ENCODE measurements at regions of chr14 and their contacts with region 1.

Region 1: GRCh38 chr14:58815161-58815701 is 177.5 kb downstream of the DACT1 start:
- DNase-seq: no peak
- CTCF ChIP-seq: no peak

Region 2: GRCh38 chr14:58705066-58705465 is 110.2 kb before region 1 on chr14:
- CTCF ChIA-PET with region 1: no interaction called
- POLR2A ChIA-PET with region 1: no interaction called
- DNase-seq: no peak
- CTCF ChIP-seq: no peak

Region 3: DNA sequence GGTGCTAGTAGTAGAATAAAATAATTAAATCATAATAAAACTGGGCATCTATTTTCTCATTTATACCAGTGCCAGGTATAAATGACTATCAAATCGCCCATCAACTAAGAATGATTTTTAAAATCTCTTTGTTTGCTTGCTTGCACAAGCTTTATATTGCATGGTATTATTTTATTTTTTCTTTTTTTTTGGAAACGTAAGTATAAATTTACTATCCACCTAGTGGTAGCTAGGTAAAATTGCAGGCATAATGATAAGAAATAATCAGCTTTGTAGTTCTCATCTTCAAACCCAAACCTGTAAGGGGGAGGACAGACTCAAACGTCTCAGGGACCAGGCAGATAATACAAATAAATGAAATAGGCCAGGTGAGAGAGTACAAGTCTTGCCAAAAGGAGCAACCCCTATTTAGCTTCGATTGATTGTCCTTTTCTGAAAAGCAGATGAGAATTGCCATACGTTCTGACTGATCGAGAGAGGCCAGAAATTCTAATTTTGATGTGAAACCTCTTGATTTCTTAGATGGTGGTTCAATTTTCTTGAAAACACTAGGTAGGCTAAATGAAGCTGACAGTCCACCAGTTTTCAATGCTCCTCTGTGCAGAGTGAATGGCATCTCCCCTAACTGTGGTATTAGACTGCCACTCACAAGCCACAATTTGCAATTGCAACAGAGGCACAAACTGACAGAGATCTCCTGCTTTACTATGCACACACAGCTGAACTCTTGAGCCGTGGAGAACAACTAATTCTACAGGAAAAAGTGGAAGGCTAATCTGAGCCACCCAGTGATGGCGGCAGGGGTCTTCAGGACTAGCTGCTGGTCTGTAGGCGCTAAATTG is 11.8 kb after region 1 on chr14:
- CTCF ChIA-PET with region 1: interaction called, 13 read pairs
- POLR2A ChIA-PET with region 1: no interaction called
- DNase-seq: no peak
- CTCF ChIP-seq: no peak